Astrocyte of the cerebellum (primary cell): ENCODE measurements at regions of chr20 and their contacts with region 1.

Region 1: DNA sequence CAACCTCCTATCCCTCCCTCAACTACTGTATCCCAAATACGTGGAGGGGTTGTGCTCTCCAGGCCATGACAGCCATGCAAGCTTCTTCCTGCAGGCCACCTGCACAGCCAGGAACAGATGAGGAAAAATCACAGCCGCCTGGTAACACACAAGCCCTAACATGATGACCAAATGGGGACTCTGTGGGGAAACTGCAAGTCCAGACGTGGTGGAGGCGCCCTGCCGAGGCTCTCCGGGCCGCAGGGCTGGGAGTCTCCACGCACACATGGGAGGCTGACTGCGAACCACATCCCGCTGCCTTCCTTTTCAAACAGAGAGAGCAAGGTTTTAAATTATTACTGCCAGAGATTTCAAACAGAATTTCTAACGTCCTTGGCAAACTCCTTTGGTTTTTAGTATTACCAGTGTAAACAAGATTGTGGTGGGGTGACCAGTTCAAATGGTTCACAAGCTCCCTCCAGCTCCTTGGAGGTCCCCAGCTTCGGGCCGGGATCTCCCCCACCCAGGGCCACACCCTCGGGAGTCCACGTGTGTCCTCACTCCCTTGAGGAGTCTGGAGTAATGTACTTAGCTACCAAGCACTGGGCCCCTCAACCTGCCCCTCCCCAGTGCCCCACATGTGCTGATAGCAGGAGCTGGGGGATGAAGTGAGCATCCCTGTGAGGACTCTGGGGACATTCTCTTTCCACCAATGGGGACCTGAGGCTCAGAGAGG is 252.8 kb downstream of the TAF4 start:
- DNase-seq: no peak
- H3K4me3 ChIP-seq: no peak overlapping the region
- CTCF ChIP-seq: no peak

Region 2: GRCh38 chr20:61845233-61845671 is 32.3 kb after region 1 on chr20:
- in situ Hi-C with region 1: loop called (anchors 5 kb)
- DNase-seq: no peak
- H3K4me3 ChIP-seq: no peak overlapping the region
- CTCF ChIP-seq: no peak